K562 (cell line): ENCODE measurements at regions of chr11 and their contacts with region 1.

Region 1: DNA sequence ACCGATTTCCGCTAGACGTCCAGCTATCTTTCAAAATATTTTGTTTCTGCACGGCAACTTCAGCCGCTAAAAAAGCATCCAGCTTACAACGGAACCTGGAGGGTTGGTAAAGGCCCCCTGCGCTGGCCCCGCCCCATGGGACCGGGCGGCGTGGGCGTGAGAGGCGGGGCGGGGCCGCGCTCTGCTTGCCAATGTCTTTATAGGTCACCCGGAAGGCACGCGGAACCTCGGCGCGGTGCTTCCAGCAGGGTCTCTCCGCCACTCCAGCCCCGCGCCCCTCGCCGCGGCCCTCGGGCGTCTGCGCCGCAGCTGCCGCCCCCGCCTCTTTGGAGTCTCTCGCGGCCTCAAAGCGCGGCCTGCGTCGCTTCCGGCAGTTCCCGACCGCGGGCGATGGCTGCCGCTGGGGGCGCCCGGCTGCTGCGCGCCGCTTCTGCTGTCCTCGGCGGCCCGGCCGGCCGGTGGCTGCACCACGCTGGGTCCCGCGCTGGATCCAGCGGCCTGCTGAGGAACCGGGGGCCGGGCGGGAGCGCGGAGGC is at the start of gene FDX1:
- DNase-seq: peak; percentile 90 to 95 (median 92)
- ATAC-seq: peak; percentile 94
- H3K4me3 ChIP-seq: peak within 1 kb of the TSS; percentile 70
- H3K27ac ChIP-seq: peak within 1 kb of the TSS; percentile 81
- H3K4me1 ChIP-seq: peaks cover 11 to 13% of the 10 kb centered on the region in 2 experiments; a peak in 4 of 5 replicates
- H3K27me3 ChIP-seq: no peaks in the 10 kb centered on the region
- CTCF ChIP-seq: peak; percentile 47 to 74 (median 53); a peak in 5 of 6 replicates
- EP300 ChIP-seq: no peak
- POLR2A ChIP-seq: peak; percentile 64; the same call in 1 of the 2 replicates
- RAD21 ChIP-seq: peak; percentile 20 to 34; a peak in 1 of 4 replicates
- polyA plus RNA-seq, gene FDX1: 6.4 to 6.9 TPM

Region 2: GRCh38 chr11:109853156-109853776 is 576.5 kb before region 1 on chr11:
- CTCF ChIA-PET with region 1: no interaction called
- POLR2A ChIA-PET with region 1: no interaction called
- in situ Hi-C with region 1: no loop called
- intact Hi-C with region 1: loop called (anchors 5 kb)
- DNase-seq: peak; percentile 13 to 60 (median 26)
- ATAC-seq: peak; percentile 85
- H3K4me3 ChIP-seq: no peak overlapping the region
- H3K27ac ChIP-seq: no peak overlapping the region
- H3K4me1 ChIP-seq: peaks cover 0 to 3% of the 10 kb centered on the region in 2 experiments; a peak in 1 of 5 replicates
- H3K27me3 ChIP-seq: no peaks in the 10 kb centered on the region
- CTCF ChIP-seq: peak; percentile 57 to 88 (median 63)
- EP300 ChIP-seq: no peak
- POLR2A ChIP-seq: no peak
- RAD21 ChIP-seq: peak; percentile 91 to 97

Region 3: GRCh38 chr11:109946322-109946846 is 483.4 kb before region 1 on chr11:
- CTCF ChIA-PET with region 1: no interaction called
- POLR2A ChIA-PET with region 1: no interaction called
- in situ Hi-C with region 1: no loop called
- intact Hi-C with region 1: loop called (anchors 5 kb)
- DNase-seq: peak; percentile 59 to 87 (median 66)
- ATAC-seq: peak; percentile 99
- H3K4me3 ChIP-seq: no peak overlapping the region
- H3K27ac ChIP-seq: peak overlapping the region; percentile 43; the same call in 2 of the 3 replicates
- H3K4me1 ChIP-seq: no peaks in the 10 kb centered on the region; a peak in 1 of 5 replicates
- H3K27me3 ChIP-seq: no peaks in the 10 kb centered on the region
- CTCF ChIP-seq: peak; percentile 80 to 94 (median 90)
- EP300 ChIP-seq: peak; percentile 51
- POLR2A ChIP-seq: no peak
- RAD21 ChIP-seq: peak; percentile 95 to 96

Region 4: DNA sequence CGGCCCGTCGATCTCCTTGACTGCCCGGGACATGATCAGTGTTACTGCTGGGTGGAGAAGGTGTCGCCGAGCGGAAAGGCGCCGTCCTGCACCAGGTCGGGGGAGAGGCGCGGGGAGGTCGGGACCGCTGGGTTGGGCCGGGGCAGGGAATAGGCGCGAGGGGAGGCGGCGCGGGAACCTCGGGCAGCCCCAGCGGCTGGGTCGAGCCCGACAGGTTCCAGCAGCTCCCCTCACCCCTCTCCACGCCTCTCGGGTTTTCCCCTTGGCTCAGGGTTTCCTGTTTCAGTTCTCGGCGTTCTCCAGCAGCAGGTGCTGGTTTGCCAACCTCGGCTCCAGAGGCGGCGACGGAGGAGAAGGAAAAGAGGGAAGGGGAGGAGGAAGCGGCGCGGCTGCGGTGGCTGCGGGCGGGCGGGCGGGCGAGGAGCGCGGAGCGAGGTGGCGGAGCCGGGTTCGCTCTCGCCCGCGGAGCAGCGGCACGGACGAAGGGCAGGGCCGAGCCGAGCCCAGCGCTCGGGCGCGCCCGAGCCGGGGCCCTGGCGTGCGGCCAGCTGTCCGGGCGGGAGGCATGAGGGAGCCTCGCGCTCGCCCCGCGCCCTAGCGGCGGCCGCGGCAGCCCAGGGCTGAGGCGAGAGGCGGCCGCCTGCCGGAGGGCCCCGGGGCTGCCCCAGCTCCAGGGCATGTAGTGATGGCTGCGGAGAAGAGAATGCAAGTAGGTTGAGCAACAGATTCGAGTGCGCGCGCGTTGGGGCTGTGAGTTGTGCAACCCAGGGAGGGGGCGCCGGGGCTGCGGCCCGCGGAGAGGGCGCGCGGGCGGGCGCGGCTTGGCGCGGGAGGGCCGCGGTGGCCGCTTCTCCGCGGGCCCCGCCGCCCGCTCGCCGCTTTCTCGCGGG is 337.0 kb before region 1 on chr11 and contains the start of gene ZC3H12C:
- CTCF ChIA-PET with region 1: no interaction called
- POLR2A ChIA-PET with region 1: no interaction called
- in situ Hi-C with region 1: no loop called
- intact Hi-C with region 1: loop called (anchors 10 kb)
- DNase-seq: peak; percentile 79 to 83 (median 80)
- ATAC-seq: peak; percentile 95
- H3K4me3 ChIP-seq: peak within 1 kb of the TSS; percentile 62
- H3K27ac ChIP-seq: peak within 1 kb of the TSS; percentile 69; the same call in 2 of the 3 replicates
- H3K4me1 ChIP-seq: peaks cover 4 to 15% of the 10 kb centered on the region in 2 experiments; a peak in 4 of 5 replicates
- H3K27me3 ChIP-seq: peaks cover 0 to 3% of the 10 kb centered on the region in 2 experiments; a peak in 2 of 5 replicates
- CTCF ChIP-seq: peak; percentile 36 to 97 (median 72); a peak in 5 of 6 replicates
- EP300 ChIP-seq: no peak
- POLR2A ChIP-seq: no peak
- RAD21 ChIP-seq: peak; percentile 50 to 74
- polyA plus RNA-seq, gene ZC3H12C: 0.56 to 0.69 TPM

Region 5: GRCh38 chr11:110296226-110297075 is 133.3 kb before region 1 on chr11 and contains the start of gene RDX:
- CTCF ChIA-PET with region 1: no interaction called
- POLR2A ChIA-PET with region 1: no interaction called
- in situ Hi-C with region 1: no loop called
- intact Hi-C with region 1: loop called (anchors 5 kb)
- DNase-seq: peak; percentile 86 to 94 (median 94)
- ATAC-seq: peak; percentile 84
- H3K4me3 ChIP-seq: peak within 1 kb of the TSS; percentile 99
- H3K27ac ChIP-seq: peak within 1 kb of the TSS; percentile 96
- H3K4me1 ChIP-seq: peaks cover 13 to 25% of the 10 kb centered on the region in 2 experiments
- H3K27me3 ChIP-seq: no peaks in the 10 kb centered on the region
- CTCF ChIP-seq: peak in 2 of 3 experiments; percentile 10 to 19; a peak in 2 of 6 replicates
- EP300 ChIP-seq: no peak
- POLR2A ChIP-seq: peak; percentile 64
- RAD21 ChIP-seq: 0 out of 4 replicates have a peak, but pooled peaks of 1 of the 2 experiments have one; percentile 6
- polyA plus RNA-seq, gene RDX: 51.4 to 54.0 TPM

Region 6: GRCh38 chr11:110376711-110377324 is 53.0 kb before region 1 on chr11:
- CTCF ChIA-PET with region 1: no interaction called
- POLR2A ChIA-PET with region 1: interaction called, 3 read pairs
- in situ Hi-C with region 1: no loop called
- intact Hi-C with region 1: loop called (anchors 2 kb)
- DNase-seq: peak; percentile 52 to 75 (median 54)
- ATAC-seq: peak; percentile 88
- H3K4me3 ChIP-seq: no peak overlapping the region
- H3K27ac ChIP-seq: no peak overlapping the region
- H3K4me1 ChIP-seq: peaks cover 0 to 9% of the 10 kb centered on the region in 2 experiments; a peak in 1 of 5 replicates
- H3K27me3 ChIP-seq: no peaks in the 10 kb centered on the region
- CTCF ChIP-seq: peak; percentile 69 to 83 (median 71); a peak in 5 of 6 replicates
- EP300 ChIP-seq: no peak
- POLR2A ChIP-seq: no peak
- RAD21 ChIP-seq: peak; percentile 78 to 88

Region 7: GRCh38 chr11:111422494-111423249 is 992.9 kb after region 1 on chr11:
- CTCF ChIA-PET with region 1: no interaction called
- POLR2A ChIA-PET with region 1: interaction called, 3 read pairs
- in situ Hi-C with region 1: no loop called
- intact Hi-C with region 1: loop called (anchors 10 kb)
- DNase-seq: peak; percentile 41 to 59 (median 48)
- ATAC-seq: peak; percentile 98
- H3K4me3 ChIP-seq: no peak overlapping the region
- H3K27ac ChIP-seq: no peak overlapping the region
- H3K4me1 ChIP-seq: no peaks in the 10 kb centered on the region
- H3K27me3 ChIP-seq: peaks cover 2 to 9% of the 10 kb centered on the region in 2 experiments; a peak in 3 of 5 replicates
- CTCF ChIP-seq: peak; percentile 80 to 90 (median 82)
- EP300 ChIP-seq: no peak
- POLR2A ChIP-seq: no peak
- RAD21 ChIP-seq: peak; percentile 59 to 78